Activated T-helper 2 cell treated with anti-CD3 and anti-CD28 coated beads, Interferon-gamma antibody, Interleukin-2, Interleukin-4, amounts not matched to agents 10 μg/mL and 5 μg/mL and 100 μg/mL, durations not matched to agents 14 hours and 24 hours and 36 hours (primary cell): ENCODE measurements at regions of chr12 and their contacts with region 1.

Region 1: DNA sequence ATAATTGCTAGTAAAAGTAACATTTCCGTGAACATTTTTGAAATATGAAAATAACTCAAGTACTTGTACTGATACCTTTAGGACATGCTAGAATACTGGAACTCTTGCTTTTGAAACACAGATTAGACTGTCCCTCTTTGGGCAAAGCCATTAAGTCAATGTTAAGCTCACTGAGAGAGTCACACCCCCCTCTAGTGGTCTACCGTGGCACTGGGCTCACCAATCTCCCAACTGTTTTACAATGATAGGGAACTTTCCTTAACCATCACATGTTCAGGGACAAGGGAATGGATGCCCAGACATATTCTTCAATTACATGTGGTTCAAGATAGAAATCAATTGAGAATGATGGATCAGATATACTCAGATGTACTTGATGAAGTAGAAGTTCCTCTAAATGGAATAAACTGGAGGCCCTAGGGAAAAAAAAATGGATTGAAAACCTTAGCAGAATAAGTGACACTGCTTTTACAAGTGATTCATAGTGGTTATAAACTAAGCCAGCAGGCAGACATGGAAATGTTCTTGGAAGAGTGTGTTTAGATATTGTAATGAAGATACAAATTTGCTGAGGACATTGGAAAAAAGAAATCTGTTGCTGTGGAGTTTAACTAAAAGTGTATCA is 17.8 kb downstream of the NANOG start:
- DNase-seq: peak; percentile 20
- H3K4me3 Mint-ChIP-seq: no peak overlapping the region
- H3K27ac Mint-ChIP-seq: no peak overlapping the region
- H3K4me1 Mint-ChIP-seq: no peaks in the 10 kb centered on the region
- H3K27me3 Mint-ChIP-seq: peaks cover 3% of the 10 kb centered on the region

Region 2: DNA sequence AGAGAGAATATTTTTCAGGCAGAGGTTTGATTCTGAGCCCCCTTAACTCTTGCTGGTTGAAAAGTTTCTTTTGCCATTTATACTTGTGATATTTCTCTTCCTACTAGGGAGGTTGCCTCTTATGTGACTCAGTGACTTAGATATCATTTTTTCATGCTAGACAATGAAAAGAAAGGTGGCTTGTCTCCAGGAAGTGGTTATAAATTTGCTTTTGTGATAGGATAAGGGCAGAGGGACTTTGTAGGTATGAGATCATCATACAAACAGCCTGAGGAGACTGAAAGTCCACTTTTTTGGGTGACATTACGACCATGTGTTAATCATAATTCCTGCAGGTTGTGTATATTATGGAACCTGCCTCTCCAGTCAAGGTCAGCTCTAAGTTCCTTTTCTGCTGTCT is 467.3 kb before region 1 on chr12:
- intact Hi-C with region 1: no loop called
- DNase-seq: no peak
- H3K4me3 Mint-ChIP-seq: no peak overlapping the region
- H3K27ac Mint-ChIP-seq: no peak overlapping the region
- H3K4me1 Mint-ChIP-seq: peaks cover 3% of the 10 kb centered on the region
- H3K27me3 Mint-ChIP-seq: no peaks in the 10 kb centered on the region

Region 3: DNA sequence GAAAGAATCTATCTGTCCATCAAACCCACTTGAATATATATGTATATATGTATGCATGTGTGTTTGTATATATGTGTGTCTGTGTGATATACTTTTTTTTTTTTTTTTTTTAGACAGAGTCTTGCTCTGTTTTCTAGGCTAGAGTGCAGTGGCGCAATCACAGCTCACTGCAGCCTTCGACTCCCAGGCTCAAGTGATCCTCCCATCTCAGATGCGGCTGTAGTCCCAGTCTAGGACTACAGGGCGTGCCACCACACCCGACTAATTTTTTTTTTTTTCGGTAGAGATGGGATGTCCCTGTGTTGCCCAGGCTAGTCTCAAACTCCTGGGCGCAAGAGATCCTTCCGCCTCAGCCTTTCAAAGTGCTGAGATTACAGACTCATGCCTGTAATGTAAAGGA is 128.2 kb before region 1 on chr12:
- intact Hi-C with region 1: loop called (anchors 1 kb)
- DNase-seq: no peak
- H3K4me3 Mint-ChIP-seq: no peak overlapping the region
- H3K27ac Mint-ChIP-seq: no peak overlapping the region
- H3K4me1 Mint-ChIP-seq: peaks cover 6% of the 10 kb centered on the region
- H3K27me3 Mint-ChIP-seq: peaks cover 2% of the 10 kb centered on the region

Region 4: GRCh38 chr12:7907009-7907408 is 100.0 kb after region 1 on chr12:
- intact Hi-C with region 1: no loop called
- DNase-seq: no peak
- H3K4me3 Mint-ChIP-seq: no peak overlapping the region
- H3K27ac Mint-ChIP-seq: no peak overlapping the region
- H3K4me1 Mint-ChIP-seq: no peaks in the 10 kb centered on the region
- H3K27me3 Mint-ChIP-seq: peaks cover 3% of the 10 kb centered on the region